A673 (cell line): ENCODE measurements at regions of chr1 and their contacts with region 1.

Region 1: GRCh38 chr1:11248155-11248554 is 14.2 kb downstream of the MTOR start:
- DNase-seq: no peak
- H3K4me3 ChIP-seq: no peak overlapping the region
- H3K27ac ChIP-seq: no peak overlapping the region
- H3K4me1 ChIP-seq: no peaks in the 10 kb centered on the region
- H3K27me3 ChIP-seq: no peaks in the 10 kb centered on the region
- CTCF ChIP-seq: no peak

Region 2: DNA sequence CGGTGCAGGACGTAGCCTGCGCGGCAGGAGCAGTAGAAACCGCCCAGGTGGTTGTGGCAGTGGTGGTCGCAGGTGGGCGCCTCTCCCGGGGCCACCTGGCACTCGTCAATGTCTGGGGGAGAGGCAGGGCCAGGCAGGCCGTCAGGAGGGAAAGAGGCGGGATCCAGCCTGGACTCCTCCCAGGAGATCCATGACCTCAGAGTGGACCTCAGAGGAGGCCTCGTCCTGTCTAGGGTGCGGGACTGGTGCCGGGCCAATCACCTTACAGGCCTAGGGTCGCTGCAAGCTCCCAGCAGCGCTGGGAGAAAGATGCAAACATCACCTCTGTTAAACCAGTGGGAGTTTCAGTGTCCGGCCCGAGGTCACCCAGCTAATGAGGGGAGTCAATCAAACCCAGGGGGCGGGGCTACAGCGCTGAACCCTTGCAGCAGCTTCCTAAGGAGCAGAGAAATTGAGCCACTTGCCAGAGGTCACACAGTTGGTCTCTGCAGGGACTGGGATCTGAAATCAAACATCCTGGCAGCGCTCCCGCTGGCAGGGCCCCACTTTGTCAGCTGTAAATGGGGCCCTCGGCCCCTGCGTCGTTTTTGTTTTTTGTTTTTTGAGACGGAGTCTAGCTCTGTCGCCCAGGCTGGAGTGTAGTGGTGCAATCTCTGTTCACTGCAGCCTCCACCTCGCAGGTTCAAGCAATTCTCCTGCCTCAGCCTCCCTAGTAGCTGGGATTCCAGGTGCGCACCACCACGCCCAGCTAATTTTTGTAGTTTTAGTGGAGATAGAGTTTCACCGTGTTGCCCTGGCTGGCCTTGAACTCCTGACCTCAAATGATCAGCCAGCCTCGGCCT is 202.5 kb before region 1 on chr1:
- CTCF ChIA-PET with region 1: no interaction called
- POLR2A ChIA-PET with region 1: no interaction called
- intact Hi-C with region 1: no loop called
- DNase-seq: no peak
- H3K4me3 ChIP-seq: no peak overlapping the region
- H3K27ac ChIP-seq: no peak overlapping the region
- H3K4me1 ChIP-seq: no peaks in the 10 kb centered on the region
- H3K27me3 ChIP-seq: no peaks in the 10 kb centered on the region
- CTCF ChIP-seq: no peak

Region 3: DNA sequence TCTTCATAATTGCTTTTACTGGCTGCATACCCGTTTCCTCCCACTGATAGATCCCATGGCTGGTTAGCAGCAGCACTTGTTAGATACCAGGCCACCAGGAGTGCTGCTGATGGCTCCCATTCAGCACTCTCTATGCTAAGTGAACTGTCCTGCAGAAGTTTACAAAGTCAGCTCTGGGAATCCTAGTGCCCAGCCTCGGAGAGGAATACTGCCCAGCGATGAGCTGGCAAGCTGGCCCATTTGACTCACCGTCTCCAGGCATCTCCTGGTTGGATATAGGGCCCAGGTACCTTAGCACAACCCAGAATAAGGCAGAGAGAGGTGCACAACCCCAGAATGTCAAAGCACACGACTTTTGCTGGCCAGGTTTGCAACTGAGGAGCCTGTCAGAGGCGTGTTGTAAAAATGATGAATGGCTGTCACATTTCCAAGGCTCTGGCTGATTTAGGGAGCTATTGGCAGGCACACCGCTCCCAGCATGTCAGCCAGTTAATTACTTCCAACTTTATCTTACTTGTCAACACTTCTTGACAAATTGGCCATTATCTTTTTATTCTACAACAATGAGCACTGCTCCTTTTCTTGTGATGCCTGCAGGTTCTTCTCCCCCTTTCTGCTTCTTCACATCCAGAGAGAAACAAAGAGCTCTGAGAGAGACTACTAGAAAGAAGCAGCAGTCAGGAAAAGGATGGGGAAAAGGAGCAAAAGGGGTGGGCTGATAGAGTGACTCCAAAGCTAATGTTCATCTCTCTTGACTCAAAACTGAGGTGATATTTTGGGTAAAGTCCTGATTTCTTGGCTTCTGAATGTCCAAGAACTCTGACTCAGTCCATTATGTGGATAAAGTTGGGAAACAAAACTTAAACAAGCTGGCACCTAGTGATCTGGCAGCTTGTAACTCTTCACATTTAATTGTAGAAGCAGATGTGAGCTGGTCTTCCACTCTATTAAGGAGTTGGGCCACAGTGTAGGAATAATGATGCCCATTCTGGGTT is 69.8 kb before region 1 on chr1:
- CTCF ChIA-PET with region 1: no interaction called
- POLR2A ChIA-PET with region 1: no interaction called
- intact Hi-C with region 1: no loop called
- DNase-seq: peak; percentile 65
- H3K4me3 ChIP-seq: no peak overlapping the region
- H3K27ac ChIP-seq: no peak overlapping the region
- H3K4me1 ChIP-seq: peaks cover 11% of the 10 kb centered on the region
- H3K27me3 ChIP-seq: no peaks in the 10 kb centered on the region
- CTCF ChIP-seq: no peak

Region 4: DNA sequence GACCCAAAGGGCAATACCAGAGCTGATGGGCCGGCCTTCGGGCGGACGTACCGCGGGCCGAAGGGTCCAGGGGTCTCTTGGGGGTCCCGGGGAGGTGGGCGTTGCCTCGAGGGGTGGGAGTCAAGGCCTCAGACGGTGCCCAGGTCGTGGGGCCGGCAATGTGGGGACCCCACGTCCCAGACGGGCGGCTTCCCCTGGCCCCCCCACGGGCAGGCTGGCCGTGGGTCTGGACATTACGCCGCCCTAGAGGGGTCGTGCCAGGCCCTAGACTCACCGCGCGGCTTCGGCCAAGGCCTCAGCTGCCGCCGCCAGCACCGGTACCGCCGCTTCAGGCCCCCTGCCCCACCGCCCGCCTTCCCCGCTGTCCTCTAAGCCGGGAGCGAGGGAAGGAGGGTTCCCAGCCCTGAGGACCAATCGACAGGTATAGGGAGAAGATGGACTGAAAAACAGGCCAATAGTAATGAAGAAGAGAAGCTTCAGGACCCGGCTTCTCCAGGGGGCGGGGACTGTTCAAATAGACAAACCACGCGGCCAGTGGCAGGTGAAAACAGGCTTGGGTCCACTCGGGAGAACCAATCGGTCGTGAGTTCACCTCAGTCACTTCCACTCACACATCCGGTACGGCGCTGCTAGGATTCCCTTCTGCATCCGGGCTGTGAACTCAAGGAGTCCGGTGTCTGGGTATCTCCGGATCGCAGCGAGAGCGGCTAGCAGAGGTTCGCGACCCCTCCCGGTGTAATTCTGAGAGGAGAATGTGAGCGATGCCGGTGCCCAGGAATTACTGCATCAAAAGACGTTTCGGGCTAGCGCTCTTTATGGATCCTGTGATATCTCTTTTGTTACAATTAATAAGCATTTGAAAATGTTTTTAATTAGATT is 14.3 kb after region 1 on chr1 and contains the start of gene MTOR:
- CTCF ChIA-PET with region 1: no interaction called
- POLR2A ChIA-PET with region 1: interaction called, 24 read pairs
- intact Hi-C with region 1: no loop called
- DNase-seq: peak; percentile 100
- H3K4me3 ChIP-seq: peak within 1 kb of the TSS; percentile 83
- H3K27ac ChIP-seq: peak within 1 kb of the TSS; percentile 81
- H3K4me1 ChIP-seq: peaks cover 4% of the 10 kb centered on the region
- H3K27me3 ChIP-seq: no peaks in the 10 kb centered on the region
- CTCF ChIP-seq: 0 out of 2 replicates have a peak, but pooled peaks have one; percentile 33
- total RNA-seq, gene MTOR: 63.7 and 66.3 TPM in 2 replicates

Region 5: DNA sequence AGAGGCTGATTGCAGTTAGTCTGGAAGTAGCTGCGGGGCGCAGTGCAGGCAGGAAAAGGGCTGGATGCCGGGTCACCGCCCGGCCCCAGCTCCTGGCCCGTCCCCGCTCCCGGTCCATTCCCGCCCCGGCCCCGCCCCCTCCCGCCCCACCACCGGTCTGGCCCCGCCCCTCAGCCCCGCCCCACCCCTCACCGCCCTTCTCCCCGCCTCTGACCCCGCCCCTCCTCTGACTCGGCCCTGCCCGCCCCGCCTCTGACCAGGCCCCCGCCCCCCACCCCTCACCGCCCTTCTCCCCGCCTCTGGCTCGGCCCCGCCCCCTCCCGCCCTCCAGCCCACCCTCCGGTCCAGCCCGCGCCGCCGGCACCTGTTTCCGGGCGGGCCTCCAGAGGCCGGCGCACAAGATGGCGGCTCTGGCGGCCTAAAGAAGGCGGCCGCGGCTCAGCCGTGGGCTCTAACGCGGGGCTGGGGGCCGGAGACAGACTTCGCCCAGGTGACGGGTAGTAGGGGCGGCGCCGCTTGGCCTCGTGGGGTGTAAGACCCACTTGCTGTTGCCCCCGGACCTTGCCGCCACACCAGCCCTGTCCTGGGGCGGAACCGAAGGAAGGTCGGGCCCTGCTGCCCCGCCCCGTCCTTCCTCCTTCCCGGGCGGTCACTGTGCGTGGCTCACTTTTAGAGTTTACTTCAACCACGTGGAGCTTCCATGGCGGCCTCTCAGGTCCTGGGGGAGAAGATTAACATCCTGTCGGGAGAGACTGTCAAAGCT is 24.9 kb after region 1 on chr1 and contains the start of gene UBIAD1:
- CTCF ChIA-PET with region 1: no interaction called
- POLR2A ChIA-PET with region 1: no interaction called
- intact Hi-C with region 1: no loop called
- DNase-seq: peak; percentile 91
- H3K4me3 ChIP-seq: peak within 1 kb of the TSS; percentile 95
- H3K27ac ChIP-seq: peak within 1 kb of the TSS; percentile 95
- H3K4me1 ChIP-seq: no peaks in the 10 kb centered on the region
- H3K27me3 ChIP-seq: no peaks in the 10 kb centered on the region
- CTCF ChIP-seq: no peak
- total RNA-seq, gene UBIAD1: 19.6 and 20.5 TPM in 2 replicates